Left cardiac atrium (tissue), 4 donors: ENCODE measurements at regions of chr12 and their contacts with region 1.

Region 1: GRCh38 chr12:38906482-38907170 is 1.2 kb upstream of the CPNE8 start:
- DNase-seq: peak; percentile 91
- ATAC-seq: peak; percentile 82 to 83

Region 2: GRCh38 chr12:38324896-38325295 is 581.7 kb before region 1 on chr12:
- intact Hi-C with region 1: loop called (anchors 5 to 10 kb)
- DNase-seq: no peak
- ATAC-seq: no peak

Region 3: GRCh38 chr12:38332814-38333213 is 573.8 kb before region 1 on chr12:
- intact Hi-C with region 1: loop called (anchors 5 to 10 kb)
- DNase-seq: no peak
- ATAC-seq: no peak

Region 4: GRCh38 chr12:38664661-38665269 is 241.9 kb before region 1 on chr12:
- intact Hi-C with region 1: loop called (anchors 5 to 10 kb)
- DNase-seq: no peak
- ATAC-seq: no peak